ENCODE measurements at regions of chr6 and their contacts with region 1.

Region 1: DNA sequence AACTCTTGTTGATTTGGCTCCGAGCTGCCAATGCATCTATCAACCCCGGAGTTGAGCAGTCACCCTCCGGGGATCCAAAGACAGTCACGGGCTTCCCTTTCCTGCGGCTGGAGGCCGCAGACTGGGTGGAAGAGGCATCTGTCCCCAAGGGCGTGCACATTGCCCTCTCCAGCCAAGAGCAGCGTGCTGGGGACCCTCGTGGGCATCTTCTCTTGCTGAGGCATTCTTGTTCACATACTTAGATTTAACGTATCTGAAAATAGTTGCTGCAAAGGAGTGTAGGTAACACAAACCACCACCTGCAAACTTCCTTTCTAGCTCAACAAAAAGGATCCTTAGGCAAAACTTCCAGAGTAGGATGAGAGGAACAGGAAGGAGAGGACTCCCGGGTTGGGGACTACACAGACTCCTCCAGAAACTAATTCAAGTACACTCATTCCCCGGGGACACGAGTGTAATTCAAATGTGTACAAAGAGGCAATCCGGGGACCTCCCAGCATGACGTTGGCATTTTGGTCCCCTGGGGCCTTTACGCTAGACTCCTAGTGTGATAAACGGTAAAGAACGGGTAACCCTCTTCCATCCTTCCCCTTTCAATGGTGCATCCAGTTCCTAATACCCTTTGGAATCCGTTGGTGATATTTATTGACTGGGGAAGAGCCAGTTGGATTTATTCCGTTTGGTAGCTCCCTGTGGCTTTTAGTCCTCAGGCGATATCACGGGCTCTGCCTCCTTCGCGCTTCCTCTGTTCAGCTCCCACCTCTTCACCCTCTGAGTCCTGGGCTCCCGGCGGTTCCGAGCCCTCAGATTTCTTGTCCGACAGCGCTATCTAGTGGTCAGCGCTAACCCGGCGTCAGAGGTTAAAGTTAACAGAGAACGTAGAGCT is 2.7 kb upstream of the COL12A1 start:
- DNase-seq: peak; percentile 53 to 71
- ATAC-seq: peak; percentile 64 to 71
- H3K4me3 ChIP-seq: peak overlapping the region in 3 of 4 donors; percentile 28 to 56 (median 36)
- H3K27ac ChIP-seq: peak overlapping the region in 3 of 4 donors; percentile 29 to 55 (median 29)
- H3K4me1 ChIP-seq: peaks cover 5 to 27% of the 10 kb centered on the region in 2 donors
- H3K27me3 ChIP-seq: peaks cover 19 to 40% (median 33%) of the 10 kb centered on the region in 3 donors
- CTCF ChIP-seq: peak; percentile 80 to 89 (median 86)
- POLR2A ChIP-seq: no peak

Region 2: DNA sequence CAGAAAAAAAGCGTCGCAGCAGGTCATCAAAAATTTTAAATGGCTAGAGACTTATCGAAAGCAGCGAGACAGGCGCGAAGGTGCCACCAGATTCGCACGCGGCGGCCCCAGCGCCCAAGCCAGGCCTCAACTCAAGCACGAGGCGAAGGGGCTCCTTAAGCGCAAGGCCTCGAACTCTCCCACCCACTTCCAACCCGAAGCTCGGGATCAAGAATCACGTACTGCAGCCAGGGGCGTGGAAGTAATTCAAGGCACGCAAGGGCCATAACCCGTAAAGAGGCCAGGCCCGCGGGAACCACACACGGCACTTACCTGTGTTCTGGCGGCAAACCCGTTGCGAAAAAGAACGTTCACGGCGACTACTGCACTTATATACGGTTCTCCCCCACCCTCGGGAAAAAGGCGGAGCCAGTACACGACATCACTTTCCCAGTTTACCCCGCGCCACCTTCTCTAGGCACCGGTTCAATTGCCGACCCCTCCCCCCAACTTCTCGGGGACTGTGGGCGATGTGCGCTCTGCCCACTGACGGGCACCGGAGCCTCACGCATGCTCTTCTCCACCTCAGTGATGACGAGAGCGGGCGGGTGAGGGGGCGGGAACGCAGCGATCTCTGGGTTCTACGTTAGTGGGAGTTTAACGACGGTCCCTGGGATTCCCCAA is 1687.7 kb before region 1 on chr6 and contains the start of gene EEF1A1:
- in situ Hi-C with region 1: no loop called
- intact Hi-C with region 1: loop called (anchors 10 kb)
- DNase-seq: peak; percentile 91 to 94
- ATAC-seq: peak; percentile 82
- H3K4me3 ChIP-seq: peak within 1 kb of the TSS; percentile 60 to 83 (median 68)
- H3K27ac ChIP-seq: peak within 1 kb of the TSS; percentile 83 to 92 (median 90)
- H3K4me1 ChIP-seq: peaks cover 9 to 13% of the 10 kb centered on the region in 2 donors
- H3K27me3 ChIP-seq: peaks cover 42 to 45% (median 44%) of the 10 kb centered on the region in 3 donors
- CTCF ChIP-seq: no peak
- POLR2A ChIP-seq: peak; percentile 83 to 90
- total RNA-seq, gene EEF1A1: 846 to 1,271 (median 1,198) TPM

Region 3: DNA sequence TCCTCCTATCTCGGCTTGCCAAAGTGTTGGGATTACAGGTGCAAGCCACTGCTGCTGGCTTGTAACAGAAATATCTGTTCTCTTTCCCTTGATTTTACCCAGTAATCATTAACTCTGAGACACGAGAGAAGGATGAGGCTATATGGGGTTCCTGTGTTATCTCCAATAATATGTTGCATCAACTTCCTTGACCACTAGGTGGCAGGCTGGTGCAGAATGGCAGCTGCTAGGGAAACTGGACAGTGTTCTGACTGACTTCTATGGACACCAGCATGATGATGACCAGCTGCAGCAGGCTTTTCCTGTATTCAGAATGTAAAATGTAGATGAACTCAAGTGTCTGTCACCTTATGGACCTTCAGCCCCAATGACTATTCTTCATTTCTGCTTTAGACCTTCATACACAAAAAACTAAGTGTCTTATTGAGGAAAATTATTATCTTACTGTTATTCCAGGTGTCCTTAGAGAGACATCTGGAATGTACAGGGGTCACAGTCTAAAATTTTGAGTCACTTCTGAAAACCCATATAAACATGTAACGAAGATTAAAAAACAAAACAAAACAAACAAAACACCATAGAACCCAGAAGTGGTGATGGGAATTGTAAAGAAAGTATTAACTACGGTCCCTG is 1533.0 kb before region 1 on chr6:
- in situ Hi-C with region 1: loop called in 1 of 4 experiments (anchors 25 kb)
- intact Hi-C with region 1: loop called (anchors 1 kb)
- DNase-seq: peak; percentile 40 to 48
- ATAC-seq: peak; percentile 86 to 89
- H3K4me3 ChIP-seq: no peak overlapping the region
- H3K27ac ChIP-seq: no peak overlapping the region
- H3K4me1 ChIP-seq: no peaks in the 10 kb centered on the region
- H3K27me3 ChIP-seq: no peaks in the 10 kb centered on the region
- CTCF ChIP-seq: peak; percentile 43 to 89 (median 75)
- POLR2A ChIP-seq: no peak

Region 4: DNA sequence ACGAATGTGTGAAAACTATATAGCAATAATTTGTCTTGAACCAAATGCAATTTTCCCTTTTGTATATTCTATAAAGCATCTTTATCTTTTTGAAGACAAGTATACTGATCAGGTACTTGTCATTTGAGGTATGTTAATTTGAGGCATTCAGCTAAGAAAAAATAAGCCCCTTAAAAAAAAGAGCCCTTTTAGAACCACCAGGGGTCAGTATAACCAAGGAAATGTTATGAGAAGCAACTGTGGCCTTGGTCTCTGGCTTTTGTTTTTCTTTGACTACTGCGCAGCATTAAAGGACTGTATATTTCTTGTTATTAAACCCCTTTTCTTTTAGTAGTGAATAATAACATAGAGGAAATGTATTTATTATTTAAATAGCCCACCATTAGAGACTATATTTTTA is 1469.4 kb before region 1 on chr6:
- in situ Hi-C with region 1: loop called in 3 of 4 experiments (anchors 10 to 25 kb)
- intact Hi-C with region 1: loop called (anchors 1 kb)
- DNase-seq: no peak
- ATAC-seq: no peak
- H3K4me3 ChIP-seq: no peak overlapping the region
- H3K27ac ChIP-seq: no peak overlapping the region
- H3K4me1 ChIP-seq: no peaks in the 10 kb centered on the region
- H3K27me3 ChIP-seq: no peaks in the 10 kb centered on the region
- CTCF ChIP-seq: peak; percentile 36 to 66 (median 56)
- POLR2A ChIP-seq: no peak

Region 5: GRCh38 chr6:73969971-73970970 is 1238.3 kb before region 1 on chr6:
- in situ Hi-C with region 1: loop called in 2 of 4 experiments (anchors 25 kb)
- intact Hi-C with region 1: no loop called
- DNase-seq: no peak
- ATAC-seq: no peak
- H3K4me3 ChIP-seq: no peak overlapping the region
- H3K27ac ChIP-seq: no peak overlapping the region
- H3K4me1 ChIP-seq: peaks cover 0 to 4% of the 10 kb centered on the region in 2 donors
- H3K27me3 ChIP-seq: no peaks in the 10 kb centered on the region
- CTCF ChIP-seq: peak in 2 of 5 experiments; percentile 33 to 48
- POLR2A ChIP-seq: no peak

Region 6: GRCh38 chr6:74182992-74183391 is 1025.5 kb before region 1 on chr6:
- in situ Hi-C with region 1: no loop called
- intact Hi-C with region 1: loop called (anchors 10 kb)
- DNase-seq: no peak
- ATAC-seq: no peak
- H3K4me3 ChIP-seq: no peak overlapping the region
- H3K27ac ChIP-seq: no peak overlapping the region
- H3K4me1 ChIP-seq: no peaks in the 10 kb centered on the region
- H3K27me3 ChIP-seq: no peaks in the 10 kb centered on the region
- CTCF ChIP-seq: no peak
- POLR2A ChIP-seq: no peak

Region 7: DNA sequence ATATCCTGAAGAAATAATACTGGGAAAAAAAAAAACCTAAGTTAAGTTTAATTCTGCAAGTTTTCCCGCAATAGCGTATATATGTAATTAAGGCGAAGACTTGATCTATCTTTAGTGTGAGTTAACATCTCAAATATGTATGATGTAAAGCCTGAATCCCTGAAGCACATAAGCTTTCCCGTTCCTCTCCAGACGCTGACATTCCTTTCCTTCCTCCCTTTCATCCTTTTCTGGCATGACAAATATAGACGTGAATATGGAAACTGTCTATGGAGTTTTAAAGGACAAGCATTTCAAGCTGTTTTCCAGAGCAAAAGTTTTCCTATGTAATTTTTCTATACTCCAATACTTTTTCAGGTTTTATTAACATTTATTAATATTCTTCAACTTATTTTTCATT is 639.7 kb before region 1 on chr6:
- in situ Hi-C with region 1: no loop called
- intact Hi-C with region 1: no loop called
- DNase-seq: no peak
- ATAC-seq: no peak
- H3K4me3 ChIP-seq: no peak overlapping the region
- H3K27ac ChIP-seq: no peak overlapping the region
- H3K4me1 ChIP-seq: peaks cover 0 to under 1% of the 10 kb centered on the region in 2 donors
- H3K27me3 ChIP-seq: no peaks in the 10 kb centered on the region
- CTCF ChIP-seq: no peak
- POLR2A ChIP-seq: no peak

Region 8: DNA sequence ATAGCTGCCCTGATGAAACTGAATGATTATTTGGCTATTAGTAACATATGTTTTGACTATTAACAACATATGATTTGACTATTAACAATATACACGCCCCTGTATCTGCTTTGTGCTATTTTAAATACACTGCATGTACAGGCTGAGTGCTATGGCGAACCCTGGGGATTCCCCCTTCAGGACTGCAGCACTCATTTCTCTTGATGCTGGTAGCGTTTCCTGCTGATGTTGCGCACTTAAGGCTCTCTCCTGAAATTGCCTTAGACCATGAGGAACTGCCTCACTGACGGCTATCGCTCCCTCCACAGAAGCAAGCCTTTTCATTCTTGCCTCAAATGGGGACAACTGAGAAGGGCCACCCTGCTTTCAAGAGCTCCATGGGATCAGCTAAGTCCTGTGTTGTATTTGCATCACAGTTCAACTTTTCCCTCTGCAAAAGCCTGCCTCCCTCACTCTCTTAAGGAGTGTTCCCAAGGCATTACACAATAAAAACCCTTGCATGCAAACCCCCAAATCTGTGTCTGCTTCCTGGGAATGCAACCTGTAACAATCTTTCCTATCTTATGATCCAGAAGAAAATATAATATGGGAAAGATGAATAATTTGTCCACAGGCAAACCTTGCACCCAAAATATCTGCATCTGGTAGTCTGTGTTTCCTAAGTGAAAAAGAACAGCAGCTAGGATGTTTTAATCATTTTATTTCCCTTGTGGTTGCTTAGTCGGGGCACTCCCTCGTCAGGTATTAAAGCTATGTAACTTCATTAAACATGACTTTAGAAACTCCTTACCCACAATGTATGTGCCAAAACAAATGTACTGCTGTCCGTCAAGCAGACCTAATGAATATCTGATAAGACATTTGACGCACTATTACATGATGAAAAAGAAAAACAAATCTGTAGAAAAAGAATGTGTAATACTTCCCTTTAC is 459.1 kb before region 1 on chr6:
- in situ Hi-C with region 1: loop called in 1 of 4 experiments (anchors 10 kb)
- intact Hi-C with region 1: loop called (anchors 10 kb)
- DNase-seq: no peak
- ATAC-seq: no peak
- H3K4me3 ChIP-seq: no peak overlapping the region
- H3K27ac ChIP-seq: no peak overlapping the region
- H3K4me1 ChIP-seq: no peaks in the 10 kb centered on the region
- H3K27me3 ChIP-seq: no peaks in the 10 kb centered on the region
- CTCF ChIP-seq: no peak
- POLR2A ChIP-seq: no peak

Region 9: DNA sequence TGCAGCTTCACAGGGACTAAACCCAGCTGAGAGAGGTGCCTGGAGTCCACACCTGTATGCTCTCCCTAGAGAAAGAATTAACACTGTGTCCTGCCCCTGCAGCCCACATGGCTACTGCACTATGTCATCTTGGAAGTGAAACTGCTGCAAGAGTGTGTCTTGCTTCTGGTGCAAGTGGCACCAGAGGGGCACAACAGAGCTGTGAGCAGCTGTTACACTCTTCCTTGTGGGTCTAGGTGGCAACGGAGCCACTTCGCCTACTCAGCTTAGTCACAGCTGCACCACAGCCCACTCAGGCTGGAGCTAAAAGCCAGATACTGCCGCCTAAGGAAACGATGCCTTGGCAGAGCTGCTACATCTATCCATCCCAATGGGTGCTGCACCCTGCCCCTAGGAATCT is 394.1 kb before region 1 on chr6:
- in situ Hi-C with region 1: no loop called
- intact Hi-C with region 1: no loop called
- DNase-seq: no peak
- ATAC-seq: no peak
- H3K4me3 ChIP-seq: no peak overlapping the region
- H3K27ac ChIP-seq: no peak overlapping the region
- H3K4me1 ChIP-seq: no peaks in the 10 kb centered on the region
- H3K27me3 ChIP-seq: no peaks in the 10 kb centered on the region
- CTCF ChIP-seq: no peak
- POLR2A ChIP-seq: no peak

Region 10: DNA sequence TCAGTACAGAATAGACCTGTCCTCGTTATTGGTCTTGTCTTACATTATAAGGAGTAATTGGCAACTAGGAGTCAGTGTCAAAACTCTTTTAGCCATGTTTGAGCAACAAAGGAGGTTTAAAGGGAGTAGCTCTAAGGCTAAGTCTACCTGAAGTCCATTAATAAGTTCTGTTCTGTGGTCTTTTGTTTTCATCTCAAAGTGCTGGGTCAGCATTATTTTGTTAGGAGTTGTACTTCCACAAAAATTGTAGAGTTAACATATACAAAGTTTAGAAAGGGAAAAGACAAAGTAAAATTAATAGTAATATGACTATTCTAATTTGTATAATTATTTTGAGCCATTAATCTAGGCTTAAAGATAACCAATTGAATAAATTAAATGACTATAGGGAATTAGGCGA is 380.4 kb after region 1 on chr6:
- in situ Hi-C with region 1: no loop called
- intact Hi-C with region 1: no loop called
- DNase-seq: no peak
- ATAC-seq: no peak
- H3K4me3 ChIP-seq: no peak overlapping the region
- H3K27ac ChIP-seq: no peak overlapping the region
- H3K4me1 ChIP-seq: no peaks in the 10 kb centered on the region
- H3K27me3 ChIP-seq: no peaks in the 10 kb centered on the region
- CTCF ChIP-seq: no peak
- POLR2A ChIP-seq: no peak

Measured in gastrocnemius medialis (tissue), 4 donors.